ENCODE measurements at regions of chr2 and their contacts with region 1.

Region 1: GRCh38 chr2:191051825-191052778 is 38.1 kb upstream of the STAT1 start:
- DNase-seq: peak in 1 of 2 donors; percentile 78
- ATAC-seq: peak; percentile 48 to 52 (median 49)
- H3K4me3 ChIP-seq: no peak overlapping the region
- H3K4me3 Mint-ChIP-seq: no peak overlapping the region
- H3K27ac ChIP-seq: no peak overlapping the region
- H3K27ac Mint-ChIP-seq: no peak overlapping the region
- H3K4me1 ChIP-seq: peaks cover 32% of the 10 kb centered on the region
- H3K4me1 Mint-ChIP-seq: peaks cover 33 to 42% of the 10 kb centered on the region in 2 donors
- H3K27me3 ChIP-seq: no peaks in the 10 kb centered on the region
- H3K27me3 Mint-ChIP-seq: no peaks in the 10 kb centered on the region
- CTCF ChIP-seq: peak; percentile 83

Region 2: GRCh38 chr2:191066197-191066918 is 14.3 kb after region 1 on chr2:
- intact Hi-C with region 1: loop called (anchors 2 kb)
- DNase-seq: peak in 1 of 2 donors; percentile 42
- ATAC-seq: peak; percentile 27 to 38 (median 29)
- H3K4me3 ChIP-seq: no peak overlapping the region
- H3K4me3 Mint-ChIP-seq: peak overlapping the region; percentile 85
- H3K27ac ChIP-seq: peak overlapping the region; percentile 83
- H3K27ac Mint-ChIP-seq: peak overlapping the region; percentile 83 to 94
- H3K4me1 ChIP-seq: peaks cover 22% of the 10 kb centered on the region
- H3K4me1 Mint-ChIP-seq: peaks cover 79 to 82% of the 10 kb centered on the region in 2 donors
- H3K27me3 ChIP-seq: no peaks in the 10 kb centered on the region
- H3K27me3 Mint-ChIP-seq: no peaks in the 10 kb centered on the region
- CTCF ChIP-seq: no peak

Region 3: GRCh38 chr2:191114403-191114886 is 62.3 kb after region 1 on chr2:
- intact Hi-C with region 1: loop called (anchors 2 kb)
- DNase-seq: peak; percentile 62 to 74
- ATAC-seq: peak; percentile 57 to 72 (median 62)
- H3K4me3 ChIP-seq: peak overlapping the region; percentile 17
- H3K4me3 Mint-ChIP-seq: peak overlapping the region; percentile 78
- H3K27ac ChIP-seq: peak overlapping the region; percentile 100
- H3K27ac Mint-ChIP-seq: peak overlapping the region; percentile 95 to 98
- H3K4me1 ChIP-seq: peaks cover 33% of the 10 kb centered on the region
- H3K4me1 Mint-ChIP-seq: peaks cover 76% of the 10 kb centered on the region in 2 donors
- H3K27me3 ChIP-seq: no peaks in the 10 kb centered on the region
- H3K27me3 Mint-ChIP-seq: no peaks in the 10 kb centered on the region
- CTCF ChIP-seq: no peak

Region 4: DNA sequence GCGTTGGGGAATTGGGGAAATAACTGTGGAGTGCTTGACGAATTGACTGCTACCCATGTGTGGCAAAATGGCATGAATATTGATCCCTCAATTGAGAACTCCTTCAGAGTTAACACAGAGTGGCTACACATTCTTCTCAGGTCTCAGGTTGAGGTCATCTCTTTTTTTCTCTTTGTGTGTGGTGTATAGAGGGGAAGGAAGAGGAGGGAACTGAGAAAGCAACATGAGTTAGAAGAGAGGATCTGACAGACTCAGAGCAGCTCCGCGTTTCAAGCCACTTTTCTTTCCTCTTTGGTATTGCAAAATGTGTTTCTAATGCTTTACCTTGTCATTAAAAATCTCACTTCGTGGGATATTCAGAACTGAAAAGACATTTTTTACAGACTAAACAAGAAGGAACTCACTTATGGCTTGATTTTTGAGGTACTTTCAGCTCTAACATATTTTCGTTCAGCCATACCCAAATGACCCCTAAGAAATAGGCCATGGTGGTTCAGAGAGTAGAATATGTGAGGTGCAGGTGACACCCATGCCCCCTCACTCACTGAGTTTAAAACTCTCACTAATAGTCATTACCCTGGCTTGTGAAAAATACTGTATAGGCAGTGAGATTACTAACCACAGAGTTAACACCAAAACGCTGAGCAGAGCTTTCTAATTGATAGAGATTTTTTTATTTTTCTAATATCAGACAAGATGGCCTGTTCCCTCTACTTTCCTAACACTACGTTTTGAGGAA is 76.2 kb after region 1 on chr2:
- intact Hi-C with region 1: loop called (anchors 1 kb)
- DNase-seq: peak in 1 of 2 donors; percentile 65
- ATAC-seq: peak; percentile 68 to 86 (median 75)
- H3K4me3 ChIP-seq: peak overlapping the region; percentile 0
- H3K4me3 Mint-ChIP-seq: peak overlapping the region; percentile 71
- H3K27ac ChIP-seq: peak overlapping the region; percentile 86
- H3K27ac Mint-ChIP-seq: peak overlapping the region; percentile 86 to 98
- H3K4me1 ChIP-seq: peaks cover 34% of the 10 kb centered on the region
- H3K4me1 Mint-ChIP-seq: peaks cover 72 to 79% of the 10 kb centered on the region in 2 donors
- H3K27me3 ChIP-seq: no peaks in the 10 kb centered on the region
- H3K27me3 Mint-ChIP-seq: no peaks in the 10 kb centered on the region
- CTCF ChIP-seq: no peak

Region 5: DNA sequence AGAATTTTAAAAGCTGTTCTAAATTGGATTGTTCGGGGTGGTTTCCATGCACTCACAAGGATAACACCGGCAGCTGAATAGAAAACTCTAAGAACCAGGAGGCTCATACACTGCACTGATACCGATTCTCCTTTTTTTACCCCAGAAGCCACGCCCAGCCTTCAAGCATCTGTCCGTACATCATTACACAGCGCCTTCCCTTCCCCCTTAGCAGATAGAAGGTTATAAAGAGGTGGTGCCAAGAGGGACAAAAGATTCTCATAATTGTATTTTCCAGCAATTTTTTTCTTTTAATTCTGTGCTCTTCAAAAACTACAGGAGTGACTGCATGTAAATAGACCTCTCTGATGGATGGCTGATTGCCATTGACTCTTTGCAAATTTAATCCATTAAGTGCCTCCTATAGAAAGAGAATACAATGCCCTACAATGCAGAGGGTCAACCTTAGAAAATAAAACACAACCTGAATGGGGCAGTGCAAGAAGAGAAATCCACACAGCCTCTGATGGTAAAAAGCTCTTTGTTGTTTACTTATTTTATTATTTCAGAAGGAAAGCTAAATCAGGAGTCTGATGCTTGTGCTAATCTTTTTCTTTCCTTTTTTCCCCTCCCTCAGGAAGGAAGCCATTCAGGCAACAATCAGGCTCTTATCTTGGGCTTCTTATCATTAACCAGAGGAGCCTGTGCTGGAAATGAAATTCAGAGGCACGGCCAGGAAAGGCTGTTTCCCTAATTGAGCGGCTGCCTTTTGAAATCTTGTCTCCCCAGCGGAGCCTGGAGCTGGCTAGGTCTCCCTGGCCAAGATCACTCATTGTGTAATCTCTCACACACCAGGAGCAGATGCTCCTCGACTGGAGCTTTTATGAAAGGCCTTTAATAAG is 426.9 kb after region 1 on chr2:
- intact Hi-C with region 1: no loop called
- DNase-seq: no peak
- ATAC-seq: no peak
- H3K4me3 ChIP-seq: no peak overlapping the region
- H3K4me3 Mint-ChIP-seq: no peak overlapping the region
- H3K27ac ChIP-seq: no peak overlapping the region
- H3K27ac Mint-ChIP-seq: no peak overlapping the region
- H3K4me1 ChIP-seq: no peaks in the 10 kb centered on the region
- H3K4me1 Mint-ChIP-seq: no peaks in the 10 kb centered on the region
- H3K27me3 ChIP-seq: no peaks in the 10 kb centered on the region
- H3K27me3 Mint-ChIP-seq: peaks cover 16 to 34% of the 10 kb centered on the region in 2 donors
- CTCF ChIP-seq: no peak

Measured in natural killer cell (primary cell).